ENCODE measurements at regions of chr10 and their contacts with region 1.

Region 1: DNA sequence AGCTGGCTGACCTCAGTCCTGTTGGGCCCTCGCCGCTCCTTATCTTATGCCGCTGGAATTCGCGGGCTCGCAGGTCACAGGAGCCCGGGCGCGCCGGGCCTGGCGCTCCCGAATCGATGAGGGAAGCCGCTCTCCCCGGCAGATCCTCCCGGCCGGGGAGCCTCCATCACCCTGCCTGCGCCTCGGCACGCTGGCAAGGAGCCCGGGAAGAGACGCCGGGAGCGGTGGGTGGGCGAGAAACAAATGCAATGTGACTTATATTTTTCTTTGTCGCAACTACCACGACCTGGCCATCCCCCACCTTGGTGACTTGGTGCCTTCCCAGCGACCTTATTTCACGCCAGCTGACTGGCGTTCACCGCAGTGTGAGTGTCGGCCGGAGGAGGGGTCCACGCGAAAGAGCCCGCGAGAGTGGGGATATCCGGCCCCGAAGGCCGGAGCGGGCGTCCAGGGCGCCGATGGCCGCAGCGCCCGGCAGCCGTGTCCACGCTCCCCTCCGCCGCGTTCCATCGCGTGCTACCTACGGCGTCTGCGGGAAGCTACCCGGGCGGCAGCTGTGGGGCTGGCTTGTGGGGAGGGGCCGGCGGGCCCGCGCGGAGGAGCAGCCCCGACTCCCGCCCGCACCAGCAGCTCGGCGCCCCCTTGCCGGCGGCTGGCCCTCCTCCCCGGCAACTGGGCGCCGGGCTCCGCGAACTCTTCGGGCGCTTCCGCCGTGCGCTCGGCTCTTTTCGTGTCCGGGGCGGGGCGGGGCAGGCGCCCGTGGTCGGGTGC is 494 bp upstream of the BMPR1A start:
- DNase-seq: peak; percentile 66
- H3K4me3 ChIP-seq: peak overlapping the region; percentile 82
- H3K27ac ChIP-seq: peak overlapping the region; percentile 97
- H3K27me3 ChIP-seq: no peaks in the 10 kb centered on the region
- CTCF ChIP-seq: no peak

Region 2: DNA sequence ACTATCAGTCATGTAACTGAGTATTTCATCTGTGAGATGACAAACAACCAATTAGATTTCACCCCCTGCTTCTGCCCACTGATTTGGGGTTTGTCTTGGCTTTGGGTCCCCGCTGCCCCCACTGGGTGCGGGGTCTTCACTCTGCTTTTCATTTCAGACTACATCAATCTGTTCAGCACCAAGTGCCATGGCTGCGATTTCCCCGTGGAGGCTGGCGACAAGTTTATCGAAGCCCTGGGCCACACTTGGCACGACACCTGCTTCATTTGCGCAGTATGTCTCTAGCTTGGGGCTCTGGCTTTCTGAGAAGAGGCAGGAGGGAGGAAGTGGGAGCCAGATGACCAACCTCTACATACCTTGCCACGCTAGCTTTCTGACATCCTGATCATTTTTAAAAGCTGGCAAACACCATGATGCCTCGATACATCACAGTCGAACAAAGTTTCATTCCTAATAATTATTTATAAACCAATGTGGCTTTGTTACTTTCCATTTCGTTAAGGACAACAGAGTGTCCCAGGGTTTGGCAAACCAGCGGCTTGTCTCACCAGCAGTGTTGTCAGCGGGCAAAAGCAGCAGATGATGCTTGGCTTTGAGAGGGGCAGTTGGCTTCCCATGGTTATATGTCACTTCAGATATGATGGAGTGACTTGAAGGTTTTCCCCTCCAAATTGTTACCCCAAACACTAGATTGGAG is 29.8 kb before region 1 on chr10:
- CTCF ChIA-PET with region 1: interaction called, 12 read pairs
- POLR2A ChIA-PET with region 1: interaction called, 3 read pairs
- DNase-seq: no peak
- H3K4me3 ChIP-seq: no peak overlapping the region
- H3K27ac ChIP-seq: no peak overlapping the region
- H3K27me3 ChIP-seq: peaks cover 2% of the 10 kb centered on the region
- CTCF ChIP-seq: no peak

Region 3: GRCh38 chr10:86770417-86770960 is 14.6 kb after region 1 on chr10:
- CTCF ChIA-PET with region 1: interaction called, 12 read pairs
- POLR2A ChIA-PET with region 1: interaction called, 14 read pairs
- DNase-seq: no peak
- H3K4me3 ChIP-seq: no peak overlapping the region
- H3K27ac ChIP-seq: no peak overlapping the region
- H3K27me3 ChIP-seq: no peaks in the 10 kb centered on the region
- CTCF ChIP-seq: no peak

Region 4: DNA sequence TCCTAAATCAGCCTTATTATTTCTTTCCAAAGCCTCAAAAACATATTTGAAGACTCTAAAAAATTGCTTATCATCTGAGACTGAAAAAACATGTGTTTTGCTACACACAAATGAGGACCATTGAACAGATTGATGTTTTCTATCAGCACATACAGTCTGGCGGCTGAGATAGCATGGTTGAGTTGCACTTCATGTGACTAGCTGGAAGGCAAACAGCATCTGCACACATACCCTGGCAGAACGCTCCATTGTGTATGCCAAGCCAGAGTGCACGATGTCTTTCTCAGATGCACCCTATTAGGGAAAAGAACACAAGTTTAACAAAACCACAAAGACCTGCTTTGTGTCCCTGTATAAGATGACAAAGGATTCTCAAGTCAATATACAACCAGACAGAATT is 297.2 kb after region 1 on chr10:
- CTCF ChIA-PET with region 1: no interaction called
- POLR2A ChIA-PET with region 1: no interaction called
- DNase-seq: no peak
- H3K4me3 ChIP-seq: no peak overlapping the region
- H3K27ac ChIP-seq: no peak overlapping the region
- H3K27me3 ChIP-seq: no peaks in the 10 kb centered on the region
- CTCF ChIP-seq: no peak

Measured in AG04450 (cell line).